Naive thymus-derived CD4-positive, alpha-beta T cell (primary cell): ENCODE measurements at regions of chrX and their contacts with region 1.

Region 1: GRCh38 chrX:155612312-155613224 is at the start of gene TMLHE:
- DNase-seq: peak; percentile 28 to 68 (median 48)
- ATAC-seq: peak; percentile 93
- H3K4me3 ChIP-seq: peak within 1 kb of the TSS; percentile 83
- H3K4me3 Mint-ChIP-seq: peak within 1 kb of the TSS; percentile 87 to 95 (median 91)
- H3K27ac ChIP-seq: peak within 1 kb of the TSS; percentile 96
- H3K27ac Mint-ChIP-seq: peak within 1 kb of the TSS; percentile 91 to 97 (median 95)
- H3K4me1 ChIP-seq: no peaks in the 10 kb centered on the region
- H3K4me1 Mint-ChIP-seq: peaks cover 8 to 43% (median 33%) of the 10 kb centered on the region in 7 donors
- H3K27me3 ChIP-seq: no peaks in the 10 kb centered on the region
- H3K27me3 Mint-ChIP-seq: no peaks in the 10 kb centered on the region
- total RNA-seq, gene TMLHE: 11.8 to 17.7 (median 14.6) TPM

Region 2: GRCh38 chrX:155632386-155633100 is 20.0 kb after region 1 on chrX:
- CTCF ChIA-PET with region 1: no interaction called
- POLR2A ChIA-PET with region 1: no interaction called
- intact Hi-C with region 1: loop called in 1 of 2 experiments (anchors 1 kb)
- DNase-seq: peak in 7 of 9 donors; percentile 3 to 34 (median 18)
- ATAC-seq: peak; percentile 82
- H3K4me3 ChIP-seq: peak overlapping the region; percentile 12
- H3K4me3 Mint-ChIP-seq: peak overlapping the region; percentile 15 to 88 (median 80)
- H3K27ac ChIP-seq: peak overlapping the region; percentile 18
- H3K27ac Mint-ChIP-seq: peak overlapping the region; percentile 40 to 96 (median 87)
- H3K4me1 ChIP-seq: no peaks in the 10 kb centered on the region
- H3K4me1 Mint-ChIP-seq: peaks cover 0 to 12% (median 11%) of the 10 kb centered on the region in 7 donors
- H3K27me3 ChIP-seq: no peaks in the 10 kb centered on the region
- H3K27me3 Mint-ChIP-seq: no peaks in the 10 kb centered on the region